BJ (cell line): ENCODE measurements at regions of chr2 and their contacts with region 1.

Region 1: DNA sequence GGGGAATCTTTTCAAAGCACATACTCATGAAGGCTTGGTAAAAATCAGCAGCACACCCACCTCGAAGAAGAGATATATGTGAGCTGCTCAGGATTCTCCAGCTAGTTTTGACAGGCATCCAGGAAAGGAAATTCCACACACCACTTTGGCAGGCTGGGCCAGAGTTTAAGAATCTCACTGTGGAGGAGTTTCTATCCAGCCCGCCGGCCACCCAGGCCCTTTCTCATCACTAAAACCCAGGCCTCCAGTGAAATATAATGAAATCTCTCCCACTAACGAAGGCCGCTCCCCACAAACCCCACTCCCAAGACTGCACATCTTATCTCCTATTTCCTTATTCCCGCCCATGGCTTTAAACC is 202.0 kb downstream of the GLI2 start:
- DNase-seq: peak; percentile 55
- H3K4me3 ChIP-seq: no peak overlapping the region
- H3K27me3 ChIP-seq: no peaks in the 10 kb centered on the region
- CTCF ChIP-seq: no peak

Region 2: DNA sequence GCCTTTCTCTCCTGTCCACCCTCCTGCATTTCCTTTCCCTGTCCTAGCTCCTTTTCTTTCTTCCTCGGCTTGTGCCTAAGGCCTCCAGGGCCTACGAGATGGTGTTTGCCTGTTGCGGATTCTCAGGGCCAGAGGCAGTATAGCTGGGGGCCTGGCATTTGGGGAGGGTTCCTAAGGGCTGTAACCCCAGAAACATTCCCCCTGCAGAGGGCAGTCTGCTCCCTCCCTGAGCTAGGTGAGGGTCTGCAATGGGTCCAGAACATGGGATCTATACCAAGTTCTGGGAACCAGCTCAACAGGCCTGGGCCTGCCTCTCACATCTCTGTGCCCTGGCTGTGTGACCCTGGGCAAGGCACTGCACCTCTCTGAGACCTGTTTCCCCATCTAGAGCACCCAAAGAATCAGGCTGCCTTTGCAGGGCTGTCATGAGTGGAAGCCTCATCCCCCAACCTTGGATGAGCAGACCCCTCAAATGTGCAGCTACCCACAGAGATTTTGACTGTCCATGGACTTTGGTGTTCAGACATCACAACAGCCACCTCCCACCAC is 104.5 kb before region 1 on chr2:
- CTCF ChIA-PET with region 1: no interaction called
- POLR2A ChIA-PET with region 1: interaction called, 11 read pairs
- DNase-seq: no peak
- H3K4me3 ChIP-seq: no peak overlapping the region
- H3K27me3 ChIP-seq: no peaks in the 10 kb centered on the region
- CTCF ChIP-seq: no peak

Region 3: GRCh38 chr2:120921457-120921856 is 16.2 kb before region 1 on chr2:
- CTCF ChIA-PET with region 1: no interaction called
- POLR2A ChIA-PET with region 1: no interaction called
- DNase-seq: no peak
- H3K4me3 ChIP-seq: no peak overlapping the region
- H3K27me3 ChIP-seq: no peaks in the 10 kb centered on the region
- CTCF ChIP-seq: no peak

Region 4: GRCh38 chr2:121197369-121198091 is 259.9 kb after region 1 on chr2:
- CTCF ChIA-PET with region 1: no interaction called
- POLR2A ChIA-PET with region 1: interaction called, 10 read pairs
- DNase-seq: peak; percentile 32
- H3K4me3 ChIP-seq: no peak overlapping the region
- H3K27me3 ChIP-seq: peaks cover 7% of the 10 kb centered on the region
- CTCF ChIP-seq: no peak